ENCODE measurements at regions of chr17 and their contacts with region 1.

Region 1: GRCh38 chr17:78421484-78422266 is 43.2 kb downstream of the PGS1 start:
- DNase-seq: peak; percentile 65 to 95
- H3K4me3 ChIP-seq: no peak overlapping the region
- H3K27ac ChIP-seq: no peak overlapping the region
- H3K4me1 ChIP-seq: peaks cover 0 to 7% (median 0%) of the 10 kb centered on the region in 4 experiments; a peak in 3 of 7 replicates
- H3K27me3 ChIP-seq: no peaks in the 10 kb centered on the region
- CTCF ChIP-seq: peak; percentile 98 to 99 (median 99)
- EP300 ChIP-seq: no peak
- POLR2A ChIP-seq: no peak
- RAD21 ChIP-seq: peak; percentile 95 to 96

Region 2: DNA sequence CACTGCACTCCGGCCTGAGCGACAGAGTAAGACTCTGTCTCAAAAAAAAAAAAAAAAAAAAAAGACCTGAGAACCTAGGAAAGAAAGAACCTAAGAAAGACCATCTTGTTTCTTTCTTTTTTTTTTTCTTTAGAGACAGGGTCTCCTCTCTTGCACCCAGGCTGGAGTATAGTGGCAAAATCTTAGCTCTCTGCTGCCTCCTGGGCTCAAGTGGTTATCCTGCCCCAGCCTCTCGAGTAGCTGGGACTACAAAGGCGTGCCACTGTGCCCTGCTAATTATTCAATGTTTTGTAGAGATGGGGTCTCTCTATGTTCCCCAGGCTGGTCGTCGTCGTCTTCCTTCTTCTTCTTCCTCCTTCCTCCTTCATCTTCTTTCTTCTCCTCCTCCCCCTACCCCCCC is 215.4 kb before region 1 on chr17:
- CTCF ChIA-PET with region 1: no interaction called
- POLR2A ChIA-PET with region 1: no interaction called
- DNase-seq: no peak
- H3K4me3 ChIP-seq: no peak overlapping the region
- H3K27ac ChIP-seq: no peak overlapping the region
- H3K4me1 ChIP-seq: no peaks in the 10 kb centered on the region
- H3K27me3 ChIP-seq: no peaks in the 10 kb centered on the region
- CTCF ChIP-seq: peak; percentile 34 to 43 (median 34); a peak in 3 of 4 replicates
- EP300 ChIP-seq: no peak
- POLR2A ChIP-seq: no peak
- RAD21 ChIP-seq: peak; percentile 22 to 54; a peak in 3 of 4 replicates

Region 3: DNA sequence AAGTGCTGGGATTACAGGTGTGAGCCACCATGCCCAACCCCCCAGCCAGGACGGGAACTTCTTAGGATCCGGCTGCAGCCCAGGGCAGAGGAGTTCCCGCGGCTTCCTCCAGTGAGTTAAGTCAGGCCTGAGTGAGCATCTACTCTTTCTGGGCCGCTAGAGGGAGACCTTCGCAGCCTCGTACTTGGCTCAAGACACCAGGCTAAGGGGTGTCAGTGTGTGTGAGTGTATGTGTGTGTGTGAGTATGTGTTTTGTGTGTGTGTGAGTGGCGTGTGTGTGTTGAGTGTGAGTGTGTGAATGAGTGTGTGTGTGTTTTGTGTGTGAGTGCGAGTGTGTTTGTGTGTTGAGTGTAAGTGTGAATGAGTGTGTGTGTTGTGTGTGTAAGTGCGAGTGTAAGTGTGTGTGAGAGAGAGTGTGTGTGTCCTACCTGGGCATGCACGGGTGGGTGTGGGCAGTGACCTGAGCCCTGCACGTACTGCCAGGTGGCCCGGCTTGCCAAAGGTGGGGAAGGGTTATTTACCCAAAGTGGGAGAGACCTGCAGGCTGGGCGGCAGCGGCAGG is 131.8 kb before region 1 on chr17:
- CTCF ChIA-PET with region 1: interaction called, 13 read pairs
- POLR2A ChIA-PET with region 1: interaction called, 3 read pairs
- DNase-seq: peak; percentile 75 to 76
- H3K4me3 ChIP-seq: no peak overlapping the region
- H3K27ac ChIP-seq: no peak overlapping the region
- H3K4me1 ChIP-seq: no peaks in the 10 kb centered on the region; a peak in 2 of 7 replicates
- H3K27me3 ChIP-seq: no peaks in the 10 kb centered on the region
- CTCF ChIP-seq: peak; percentile 90 to 95 (median 92)
- EP300 ChIP-seq: 0 out of 3 replicates have a peak, but pooled peaks of 1 of the 2 experiments have one; percentile 20
- POLR2A ChIP-seq: no peak
- RAD21 ChIP-seq: peak; percentile 82 to 89

Region 4: DNA sequence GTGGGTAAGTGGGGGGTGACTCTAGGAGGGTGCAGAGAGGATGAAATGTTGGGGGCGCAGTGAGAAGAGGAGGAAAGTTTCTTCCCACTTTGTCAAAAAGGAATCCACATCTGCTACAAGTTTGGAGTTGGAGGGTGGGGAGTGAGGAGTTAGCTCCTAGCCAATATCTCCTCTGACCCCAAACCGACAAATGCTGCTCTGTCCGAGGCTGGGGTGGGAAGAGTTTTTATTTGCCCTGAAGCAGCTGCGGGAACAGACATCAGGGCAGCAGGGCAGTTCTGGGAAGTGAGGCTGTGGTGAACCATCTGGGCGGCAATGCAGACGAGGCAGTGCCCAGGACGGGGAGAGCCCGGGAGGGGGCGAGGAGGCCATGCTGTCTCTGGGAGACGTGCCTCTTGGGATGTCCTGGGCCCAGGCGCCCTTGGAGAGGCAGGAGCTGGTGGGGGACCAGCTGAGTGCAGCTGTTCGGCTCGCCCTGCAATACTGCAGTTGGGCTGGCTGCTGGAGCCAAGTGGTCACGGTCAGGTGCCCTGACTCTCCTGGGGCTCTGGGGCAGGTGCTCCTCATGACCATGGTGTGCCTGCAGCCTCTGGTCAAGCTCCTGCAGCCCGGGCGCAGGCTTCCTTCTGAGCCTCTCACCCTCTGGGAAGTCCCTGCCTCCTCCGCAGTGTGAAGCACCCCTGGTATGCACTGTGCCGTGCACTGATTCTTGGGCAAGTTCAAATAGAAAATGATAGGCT is 55.4 kb before region 1 on chr17:
- CTCF ChIA-PET with region 1: interaction called, 257 read pairs
- POLR2A ChIA-PET with region 1: interaction called, 10 read pairs
- DNase-seq: no peak
- H3K4me3 ChIP-seq: peak overlapping the region in 2 of 4 experiments; percentile 2 to 43; a peak in 3 of 8 replicates
- H3K27ac ChIP-seq: peak overlapping the region; percentile 80
- H3K4me1 ChIP-seq: peaks cover 17 to 55% (median 45%) of the 10 kb centered on the region in 4 experiments
- H3K27me3 ChIP-seq: no peaks in the 10 kb centered on the region
- CTCF ChIP-seq: no peak
- EP300 ChIP-seq: no peak
- POLR2A ChIP-seq: no peak; a peak in 1 of 3 replicates
- RAD21 ChIP-seq: no peak

Region 5: GRCh38 chr17:78397681-78398101 is 24.0 kb before region 1 on chr17:
- CTCF ChIA-PET with region 1: interaction called, 28 read pairs
- POLR2A ChIA-PET with region 1: interaction called, 5 read pairs
- DNase-seq: no peak
- H3K4me3 ChIP-seq: no peak overlapping the region
- H3K27ac ChIP-seq: no peak overlapping the region
- H3K4me1 ChIP-seq: no peaks in the 10 kb centered on the region
- H3K27me3 ChIP-seq: no peaks in the 10 kb centered on the region
- CTCF ChIP-seq: no peak
- EP300 ChIP-seq: no peak
- POLR2A ChIP-seq: no peak
- RAD21 ChIP-seq: no peak

Region 6: GRCh38 chr17:78444392-78444791 is 22.7 kb after region 1 on chr17:
- CTCF ChIA-PET with region 1: interaction called, 23 read pairs
- POLR2A ChIA-PET with region 1: no interaction called
- DNase-seq: no peak
- H3K4me3 ChIP-seq: no peak overlapping the region
- H3K27ac ChIP-seq: no peak overlapping the region
- H3K4me1 ChIP-seq: no peaks in the 10 kb centered on the region; a peak in 1 of 7 replicates
- H3K27me3 ChIP-seq: no peaks in the 10 kb centered on the region
- CTCF ChIP-seq: no peak
- EP300 ChIP-seq: no peak
- POLR2A ChIP-seq: no peak
- RAD21 ChIP-seq: no peak